OCI-LY7 (cell line): ENCODE measurements at regions of chr19 and their contacts with region 1.

Region 1: GRCh38 chr19:21835810-21836444 is at the start of gene ZNF43:
- DNase-seq: peak; percentile 96
- H3K4me3 ChIP-seq: peak within 1 kb of the TSS; percentile 89
- H3K27ac ChIP-seq: peak within 1 kb of the TSS; percentile 78
- H3K4me1 ChIP-seq: peaks cover 12% of the 10 kb centered on the region
- CTCF ChIP-seq: no peak
- total RNA-seq, gene ZNF43: 31.5 and 39.7 TPM in 2 replicates

Region 2: GRCh38 chr19:21505459-21506451 is 330.2 kb before region 1 on chr19 and contains the start of gene ZNF429:
- CTCF ChIA-PET with region 1: no interaction called
- POLR2A ChIA-PET with region 1: no interaction called
- intact Hi-C with region 1: loop called (anchors 1 kb)
- DNase-seq: peak; percentile 96
- H3K4me3 ChIP-seq: peak within 1 kb of the TSS; percentile 84
- H3K27ac ChIP-seq: peak within 1 kb of the TSS; percentile 67
- H3K4me1 ChIP-seq: peaks cover 11% of the 10 kb centered on the region
- CTCF ChIP-seq: no peak
- total RNA-seq, gene ZNF429: 12.8 and 19.8 TPM in 2 replicates

Region 3: GRCh38 chr19:21767065-21767800 is 68.7 kb before region 1 on chr19 and contains the start of gene ZNF100:
- CTCF ChIA-PET with region 1: no interaction called
- POLR2A ChIA-PET with region 1: interaction called, 19 read pairs
- intact Hi-C with region 1: loop called (anchors 2 kb)
- DNase-seq: peak; percentile 96
- H3K4me3 ChIP-seq: peak within 1 kb of the TSS; percentile 90
- H3K27ac ChIP-seq: peak within 1 kb of the TSS; percentile 78
- H3K4me1 ChIP-seq: peaks cover 15% of the 10 kb centered on the region
- CTCF ChIP-seq: no peak
- total RNA-seq, gene ZNF100: 19.1 and 25.0 TPM in 2 replicates

Region 4: DNA sequence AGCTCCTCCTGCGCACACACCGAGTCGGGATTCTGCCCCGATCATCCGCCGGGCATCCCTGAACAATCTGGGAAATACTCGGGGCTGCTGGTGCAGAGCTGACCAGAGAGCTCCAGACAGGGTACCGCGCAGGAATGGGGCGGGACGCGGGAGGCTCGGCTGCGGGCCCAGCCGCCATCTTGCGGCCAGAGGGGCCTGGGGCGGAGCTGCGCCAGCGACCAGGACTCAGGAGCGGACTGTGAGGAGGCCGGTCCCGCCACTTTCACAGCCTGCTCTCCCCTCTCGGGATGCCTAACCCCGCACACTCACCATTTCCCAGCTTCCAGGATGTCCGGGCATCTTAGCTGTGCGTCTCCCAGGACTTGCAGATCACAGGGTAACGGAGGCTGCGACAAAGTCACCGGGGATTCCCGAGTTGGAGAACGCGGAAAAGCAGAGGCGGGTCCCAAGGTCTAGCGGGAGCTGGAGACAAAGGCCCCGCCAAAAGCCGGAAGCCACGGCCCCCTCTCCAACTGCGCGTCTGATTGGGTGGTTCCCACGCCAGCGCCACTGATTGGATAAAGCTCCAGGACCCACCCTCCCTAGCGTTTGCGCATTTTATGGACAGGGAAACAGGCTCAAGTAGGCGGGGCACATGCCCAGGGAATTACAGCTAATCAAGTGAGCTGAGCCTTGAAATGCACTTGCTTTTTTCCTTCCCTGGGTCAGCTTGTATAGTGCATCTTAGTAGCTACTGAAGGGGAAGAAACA is 15.8 kb after region 1 on chr19:
- CTCF ChIA-PET with region 1: no interaction called
- POLR2A ChIA-PET with region 1: interaction called, 12 read pairs
- intact Hi-C with region 1: loop called (anchors 1 kb)
- DNase-seq: peak; percentile 96
- H3K4me3 ChIP-seq: peak overlapping the region; percentile 92
- H3K27ac ChIP-seq: peak overlapping the region; percentile 52
- H3K4me1 ChIP-seq: peaks cover 20% of the 10 kb centered on the region
- CTCF ChIP-seq: no peak